PC-9 (cell line): ENCODE measurements at regions of chr7 and their contacts with region 1.

Region 1: GRCh38 chr7:92916674-92917224 is 80.4 kb upstream of the CDK6 start:
- DNase-seq: peak; percentile 86 to 95
- H3K4me3 ChIP-seq: no peak overlapping the region
- H3K27ac ChIP-seq: peak overlapping the region; percentile 83
- H3K4me1 ChIP-seq: peaks cover 18% of the 10 kb centered on the region
- H3K27me3 ChIP-seq: no peaks in the 10 kb centered on the region
- CTCF ChIP-seq: no peak

Region 2: GRCh38 chr7:92904292-92905131 is 12.2 kb before region 1 on chr7:
- CTCF ChIA-PET with region 1: no interaction called
- POLR2A ChIA-PET with region 1: no interaction called
- intact Hi-C with region 1: loop called (anchors 1 kb)
- DNase-seq: peak; percentile 88 to 93
- H3K4me3 ChIP-seq: no peak overlapping the region
- H3K27ac ChIP-seq: peak overlapping the region; percentile 89
- H3K4me1 ChIP-seq: peaks cover 21% of the 10 kb centered on the region
- H3K27me3 ChIP-seq: no peaks in the 10 kb centered on the region
- CTCF ChIP-seq: no peak

Region 3: DNA sequence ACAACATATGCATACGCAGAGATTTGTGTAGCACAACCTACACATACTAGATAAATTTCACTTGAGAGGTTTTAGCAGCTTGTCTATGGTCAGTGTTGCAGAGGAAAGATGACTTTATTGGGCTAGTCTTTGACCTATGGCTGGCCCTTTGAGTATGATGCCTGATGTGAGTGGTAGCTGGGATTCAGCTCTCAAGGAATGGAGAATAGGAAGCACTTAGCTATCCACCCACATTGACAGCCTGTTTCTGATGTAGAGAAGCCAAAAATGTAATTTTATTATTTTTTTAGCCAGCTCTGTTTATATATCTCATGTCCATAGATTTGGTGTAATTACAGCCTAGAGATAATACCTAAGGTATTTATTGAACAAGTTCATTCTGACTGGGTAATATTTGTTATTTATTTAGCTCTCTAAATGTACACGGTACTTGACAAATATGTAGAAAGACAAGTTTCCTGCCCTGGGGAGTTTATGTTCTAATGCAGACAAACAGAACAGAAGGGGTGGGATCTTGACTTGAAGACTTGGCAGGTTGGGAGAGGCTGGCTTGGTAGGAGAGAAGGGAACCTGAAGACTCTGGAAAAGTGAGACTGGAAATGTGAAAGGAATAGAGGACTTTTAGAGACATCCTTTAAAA is 17.2 kb after region 1 on chr7:
- CTCF ChIA-PET with region 1: no interaction called
- POLR2A ChIA-PET with region 1: no interaction called
- intact Hi-C with region 1: loop called (anchors 1 kb)
- DNase-seq: peak; percentile 55 to 97
- H3K4me3 ChIP-seq: peak overlapping the region; percentile 14; the same call in 1 of the 2 replicates
- H3K27ac ChIP-seq: peak overlapping the region; percentile 64
- H3K4me1 ChIP-seq: peaks cover 25% of the 10 kb centered on the region
- H3K27me3 ChIP-seq: no peaks in the 10 kb centered on the region
- CTCF ChIP-seq: no peak

Region 4: GRCh38 chr7:93043385-93043985 is 126.7 kb after region 1 on chr7:
- CTCF ChIA-PET with region 1: no interaction called
- POLR2A ChIA-PET with region 1: no interaction called
- intact Hi-C with region 1: loop called (anchors 2 kb)
- DNase-seq: peak in 1 of 2 experiments; percentile 75
- H3K4me3 ChIP-seq: no peak overlapping the region
- H3K27ac ChIP-seq: no peak overlapping the region
- H3K4me1 ChIP-seq: no peaks in the 10 kb centered on the region
- H3K27me3 ChIP-seq: no peaks in the 10 kb centered on the region
- CTCF ChIP-seq: no peak